Activated CD8-positive, alpha-beta T cell treated with anti-CD3 and anti-CD28 coated beads, Interleukin-2, amount 10 ng/mL, durations not matched to agents 7 days and 5 days (primary cell): ENCODE measurements at regions of chr11 and their contacts with region 1.

Region 1: DNA sequence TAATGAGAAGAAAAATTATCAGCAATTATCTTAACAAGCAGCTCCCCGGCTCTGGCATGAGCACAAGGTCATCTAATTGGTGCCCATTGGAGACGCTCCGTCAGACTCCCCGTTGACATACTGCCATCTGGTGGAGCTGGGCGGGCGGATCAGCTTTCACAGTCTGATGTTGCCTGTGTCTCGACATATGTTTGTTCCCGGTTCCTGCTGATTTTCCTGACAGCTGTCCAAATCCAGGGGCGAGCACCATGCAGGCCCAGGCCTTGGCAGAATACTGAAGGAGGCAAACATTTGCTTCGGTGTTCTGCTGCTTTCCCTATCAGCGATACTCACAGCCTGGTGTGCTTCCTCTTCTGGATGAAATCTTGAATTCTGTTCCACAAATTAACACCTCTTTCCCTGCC is 43.8 kb upstream of the BARX2 start:
- DNase-seq: peak; percentile 74
- ATAC-seq: peak; percentile 87
- H3K4me3 Mint-ChIP-seq: no peak overlapping the region
- H3K27ac Mint-ChIP-seq: no peak overlapping the region
- H3K4me1 Mint-ChIP-seq: no peaks in the 10 kb centered on the region
- H3K27me3 Mint-ChIP-seq: peaks cover 2% of the 10 kb centered on the region

Region 2: GRCh38 chr11:129117595-129118350 is 214.1 kb before region 1 on chr11:
- CTCF ChIA-PET with region 1: interaction called, 25 read pairs
- POLR2A ChIA-PET with region 1: no interaction called
- DNase-seq: peak; percentile 61
- ATAC-seq: peak; percentile 64
- H3K4me3 Mint-ChIP-seq: no peak overlapping the region
- H3K27ac Mint-ChIP-seq: no peak overlapping the region
- H3K4me1 Mint-ChIP-seq: no peaks in the 10 kb centered on the region
- H3K27me3 Mint-ChIP-seq: no peaks in the 10 kb centered on the region